Psoas muscle (tissue), 8 donors: ENCODE measurements at regions of chr15 and their contacts with region 1.

Region 1: GRCh38 chr15:97804955-97805354 is 155.5 kb upstream of the ARRDC4 start:
- DNase-seq: no peak
- ATAC-seq: no peak
- H3K4me3 ChIP-seq: no peak overlapping the region
- H3K27ac ChIP-seq: no peak overlapping the region
- H3K4me1 ChIP-seq: no peaks in the 10 kb centered on the region
- H3K27me3 ChIP-seq: peaks cover 0 to 2% (median 0%) of the 10 kb centered on the region in 3 donors
- CTCF ChIP-seq: no peak

Region 2: GRCh38 chr15:97623091-97623661 is 181.8 kb before region 1 on chr15:
- intact Hi-C with region 1: no loop called
- DNase-seq: no peak
- ATAC-seq: no peak
- H3K4me3 ChIP-seq: no peak overlapping the region
- H3K27ac ChIP-seq: no peak overlapping the region
- H3K4me1 ChIP-seq: no peaks in the 10 kb centered on the region
- H3K27me3 ChIP-seq: no peaks in the 10 kb centered on the region
- CTCF ChIP-seq: no peak

Region 3: DNA sequence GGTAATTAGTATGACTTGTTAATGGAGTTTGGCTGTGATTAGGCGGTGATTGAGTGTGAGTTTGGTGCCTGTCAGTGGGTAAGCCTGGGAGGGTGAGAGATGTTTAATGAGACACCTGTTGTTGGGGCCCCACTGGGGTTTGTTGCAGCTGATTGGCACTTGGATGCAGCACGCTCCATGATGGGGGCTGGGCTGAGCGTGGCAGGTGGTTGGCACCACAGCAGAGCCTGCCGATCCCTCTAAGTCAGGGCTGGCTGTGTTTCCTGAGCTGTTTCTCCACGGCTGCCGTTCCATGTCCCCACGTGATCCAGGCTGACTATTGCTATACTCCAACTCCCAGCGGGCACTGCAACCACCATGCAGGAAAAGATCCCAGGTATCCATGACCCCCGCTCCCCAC is 62.0 kb after region 1 on chr15:
- intact Hi-C with region 1: no loop called
- DNase-seq: peak in 1 of 2 donors; percentile 59
- ATAC-seq: peak; percentile 58 to 82 (median 74)
- H3K4me3 ChIP-seq: no peak overlapping the region
- H3K27ac ChIP-seq: no peak overlapping the region
- H3K4me1 ChIP-seq: no peaks in the 10 kb centered on the region
- H3K27me3 ChIP-seq: no peaks in the 10 kb centered on the region
- CTCF ChIP-seq: no peak

Region 4: GRCh38 chr15:98983333-98983732 is 1178.4 kb after region 1 on chr15:
- intact Hi-C with region 1: loop called in 1 of 2 experiments (anchors 10 kb)
- DNase-seq: no peak
- ATAC-seq: peak; percentile 62 to 87 (median 80)
- H3K4me3 ChIP-seq: no peak overlapping the region
- H3K27ac ChIP-seq: peak overlapping the region; percentile 83
- H3K4me1 ChIP-seq: peaks cover 41% of the 10 kb centered on the region
- H3K27me3 ChIP-seq: no peaks in the 10 kb centered on the region
- CTCF ChIP-seq: no peak